T-cell (primary cell): ENCODE measurements at regions of chr7 and their contacts with region 1.

Region 1: DNA sequence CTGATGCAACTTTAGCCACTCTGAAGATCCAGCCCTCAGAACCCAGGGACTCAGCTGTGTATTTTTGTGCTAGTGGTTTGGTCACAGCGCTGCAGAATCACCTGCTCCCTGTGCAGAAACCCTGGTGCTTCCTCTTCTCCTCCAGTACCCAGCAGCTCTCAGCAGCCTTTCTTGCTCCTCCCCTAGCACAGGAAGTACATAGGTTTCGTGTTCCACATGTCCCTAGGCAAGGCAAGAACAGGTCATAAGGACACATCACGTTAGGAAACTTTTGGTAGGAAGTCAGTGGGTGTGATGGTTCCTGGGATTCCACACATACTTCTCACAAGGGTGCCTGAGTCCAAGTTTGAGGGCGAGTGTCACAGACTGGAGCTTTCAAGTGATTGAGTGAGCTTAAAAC is 167.9 kb upstream of the PRSS1 start:
- DNase-seq: peak in 22 of 35 experiments; percentile 2 to 44 (median 16)
- ATAC-seq: peak; percentile 84 to 93 (median 90)
- H3K4me3 ChIP-seq: peak overlapping the region in 1 of 2 donors; percentile 23
- H3K4me3 Mint-ChIP-seq: peak overlapping the region; percentile 17 to 59 (median 52)
- H3K27ac ChIP-seq: no peak overlapping the region
- H3K27ac Mint-ChIP-seq: peak overlapping the region; percentile 50 to 69
- H3K4me1 ChIP-seq: peaks cover 4 to 10% of the 10 kb centered on the region in 2 experiments
- H3K4me1 Mint-ChIP-seq: peaks cover 11 to 28% (median 24%) of the 10 kb centered on the region in 3 donors
- H3K27me3 ChIP-seq: no peaks in the 10 kb centered on the region
- H3K27me3 Mint-ChIP-seq: no peaks in the 10 kb centered on the region

Region 2: DNA sequence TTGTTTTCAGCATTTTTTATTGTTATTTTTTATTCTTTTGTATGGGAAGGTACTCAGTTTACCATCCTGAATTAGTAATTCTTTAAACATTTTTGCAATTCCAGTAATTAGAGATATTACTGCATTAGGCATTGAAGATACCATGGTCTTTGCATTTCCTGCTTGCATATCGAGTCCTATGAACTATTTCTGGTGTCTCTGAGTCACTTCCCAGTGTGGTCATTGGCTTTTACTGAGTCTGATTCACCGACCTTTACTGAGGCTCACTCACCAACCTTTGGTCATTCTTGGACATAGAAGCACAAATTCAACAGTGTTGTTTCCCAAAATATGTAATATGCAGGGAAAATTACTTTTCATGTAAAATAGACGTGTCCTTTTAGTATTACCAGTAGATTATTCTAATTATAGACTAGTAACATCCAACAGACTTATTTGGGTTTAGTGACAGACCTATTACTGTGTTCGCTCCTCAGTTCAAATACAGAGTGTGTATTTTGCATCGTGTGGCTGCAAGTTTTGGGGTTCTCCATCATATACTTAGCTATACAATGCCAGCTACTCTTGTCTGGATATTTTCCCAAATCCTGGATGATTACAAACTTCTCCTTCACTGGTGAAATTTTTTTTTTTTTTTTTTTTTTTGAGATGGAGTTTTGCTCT is 12.8 kb before region 1 on chr7:
- CTCF ChIA-PET with region 1: interaction called in 1 of 2 experiments, 3 read pairs
- POLR2A ChIA-PET with region 1: interaction called in 1 of 2 experiments, 10 read pairs
- DNase-seq: no peak
- ATAC-seq: no peak
- H3K4me3 ChIP-seq: no peak overlapping the region
- H3K4me3 Mint-ChIP-seq: no peak overlapping the region
- H3K27ac ChIP-seq: no peak overlapping the region
- H3K27ac Mint-ChIP-seq: no peak overlapping the region
- H3K4me1 ChIP-seq: peaks cover 0 to 6% of the 10 kb centered on the region in 2 experiments
- H3K4me1 Mint-ChIP-seq: peaks cover 2 to 5% (median 2%) of the 10 kb centered on the region in 3 donors
- H3K27me3 ChIP-seq: peaks cover 0 to 3% of the 10 kb centered on the region in 2 experiments
- H3K27me3 Mint-ChIP-seq: peaks cover 0 to 6% of the 10 kb centered on the region in 2 donors